ENCODE measurements at regions of chr20 and their contacts with region 1.

Region 1: DNA sequence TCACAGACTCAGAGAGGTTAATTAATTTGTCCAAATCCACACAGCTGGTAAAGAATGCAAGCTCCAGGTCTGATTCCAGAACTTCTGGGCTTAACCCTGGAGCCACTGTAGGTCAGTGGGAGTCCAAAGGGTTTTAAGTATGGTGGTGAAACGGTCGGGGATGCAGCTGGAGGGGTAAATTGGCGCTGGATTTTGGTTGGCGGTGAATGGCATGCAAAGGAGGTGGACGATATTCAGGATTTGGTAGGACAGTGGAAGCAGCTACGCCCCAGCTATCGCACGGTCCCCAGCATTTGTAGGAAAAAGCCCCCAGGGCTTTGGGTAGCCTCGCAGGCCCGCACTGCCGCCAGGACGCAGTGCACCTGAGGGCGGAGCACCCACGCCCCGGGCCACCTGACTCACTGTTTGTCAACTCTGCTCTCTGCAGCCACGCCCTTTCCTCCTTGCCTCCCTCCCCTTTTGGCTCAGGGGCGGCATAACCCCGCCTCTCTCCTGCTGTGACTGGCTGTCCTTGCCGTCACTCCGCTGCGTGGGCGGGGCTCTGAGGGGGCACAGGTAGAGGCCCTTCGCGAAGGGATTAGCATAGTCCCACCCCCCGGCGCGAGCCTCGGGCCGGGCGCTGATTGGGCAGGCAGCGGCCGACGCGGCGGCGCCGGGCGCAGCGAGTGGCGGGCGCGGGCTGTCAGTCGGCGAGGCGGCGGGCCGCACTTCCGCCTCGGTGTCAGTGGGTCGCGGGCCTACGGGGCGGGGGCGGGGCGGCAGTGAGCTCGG is at the start of gene OSBPL2:
- DNase-seq: peak; percentile 100
- H3K4me3 ChIP-seq: peak within 1 kb of the TSS; percentile 62 to 96 (median 94)
- H3K27ac ChIP-seq: peak within 1 kb of the TSS; percentile 81 to 87 (median 85)
- H3K4me1 ChIP-seq: peaks cover 0 to 21% (median 20%) of the 10 kb centered on the region in 4 donors
- H3K27me3 ChIP-seq: peaks cover 0 to 9% (median 5%) of the 10 kb centered on the region in 3 donors
- CTCF ChIP-seq: no peak
- EP300 ChIP-seq: no peak
- POLR2A ChIP-seq: no peak
- total RNA-seq, gene OSBPL2: 31.6 to 36.8 (median 32.6) TPM

Region 2: DNA sequence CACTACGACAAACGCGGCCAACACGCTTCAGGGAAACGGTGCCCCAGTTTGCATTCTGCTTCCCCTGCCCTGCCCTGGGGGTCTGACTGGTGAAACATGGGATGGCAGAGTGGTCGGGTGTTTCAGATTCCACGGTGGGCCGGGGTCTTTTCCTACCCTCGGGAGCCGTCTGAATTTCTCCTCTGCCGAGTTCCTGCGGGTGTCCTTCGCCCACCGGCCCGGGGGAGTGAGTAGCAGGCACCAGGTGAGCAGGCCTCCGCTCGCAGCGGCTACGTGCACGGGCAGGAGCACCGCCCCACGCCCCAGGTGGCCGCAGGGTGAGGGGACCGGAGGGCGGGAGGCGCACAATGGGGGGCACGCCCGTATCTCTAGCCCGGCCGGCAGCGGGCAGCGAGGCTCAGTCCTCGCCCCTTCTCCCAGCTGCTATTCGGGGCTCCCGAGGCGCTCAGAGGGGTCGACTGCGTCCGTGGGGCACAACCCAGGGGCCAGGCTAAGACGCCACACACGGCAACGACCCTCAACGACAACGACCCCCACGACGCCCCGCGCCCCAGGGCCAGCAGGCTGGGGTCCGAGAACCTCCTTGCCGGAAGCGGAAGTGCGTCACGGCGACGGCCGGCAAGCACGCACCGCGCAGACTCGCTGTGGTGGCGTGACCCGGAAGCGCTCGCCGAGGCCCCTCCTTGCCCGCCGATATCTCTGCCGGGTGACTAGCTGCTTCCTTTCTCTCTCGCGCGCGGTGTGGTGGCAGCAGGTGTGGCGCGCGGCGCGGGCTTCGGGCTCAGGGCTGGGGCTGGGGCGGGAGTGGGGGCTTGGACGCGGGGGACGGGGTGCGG is 148.6 kb after region 1 on chr20 and contains the start of gene RPS21:
- intact Hi-C with region 1: loop called (anchors 5 kb)
- DNase-seq: peak; percentile 97
- H3K4me3 ChIP-seq: peak within 1 kb of the TSS; percentile 84 to 100 (median 94)
- H3K27ac ChIP-seq: peak within 1 kb of the TSS; percentile 91 to 99 (median 96)
- H3K4me1 ChIP-seq: peaks cover 0 to 34% (median 30%) of the 10 kb centered on the region in 4 donors
- H3K27me3 ChIP-seq: no peaks in the 10 kb centered on the region
- CTCF ChIP-seq: no peak
- EP300 ChIP-seq: peak in 1 of 4 donors; percentile 46
- POLR2A ChIP-seq: peak; percentile 77 to 81
- total RNA-seq, gene RPS21: 2,383 to 8,235 (median 5,456) TPM

Measured in sigmoid colon (tissue), 7 donors.